CD8-positive, alpha-beta T cell (primary cell): ENCODE measurements at regions of chr2 and their contacts with region 1.

Region 1: DNA sequence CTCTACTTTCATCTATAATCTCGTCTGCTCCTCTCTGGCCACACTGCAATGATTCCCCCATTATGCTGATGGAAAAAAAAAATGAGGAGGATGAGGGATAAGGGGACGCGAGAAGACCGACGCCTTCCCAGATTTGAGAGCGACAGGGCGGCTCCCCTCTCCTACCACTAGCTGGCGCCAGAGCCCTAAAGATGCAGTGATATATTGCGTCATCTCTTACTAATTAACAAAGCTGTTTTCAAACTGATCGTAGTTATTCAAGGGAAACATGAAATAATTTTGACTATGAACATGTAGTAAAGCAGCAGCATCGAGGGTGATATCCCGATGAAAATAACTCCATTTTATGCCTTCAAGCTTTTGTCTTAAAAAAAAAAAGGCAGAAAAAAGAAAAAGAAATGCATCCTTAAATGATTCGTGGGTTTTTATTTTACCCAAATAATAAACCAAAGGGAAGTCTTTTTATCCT is 48.0 kb upstream of the HNRNPA3 start:
- DNase-seq: peak; percentile 58 to 87 (median 82)
- ATAC-seq: peak; percentile 74
- H3K4me3 ChIP-seq: peak overlapping the region; percentile 29 to 36
- H3K4me3 Mint-ChIP-seq: no peak overlapping the region
- H3K27ac ChIP-seq: peak overlapping the region in 1 of 2 experiments; percentile 28
- H3K27ac Mint-ChIP-seq: no peak overlapping the region
- H3K4me1 ChIP-seq: peaks cover 23% of the 10 kb centered on the region
- H3K4me1 Mint-ChIP-seq: peaks cover 14% of the 10 kb centered on the region
- H3K27me3 ChIP-seq: no peaks in the 10 kb centered on the region
- H3K27me3 Mint-ChIP-seq: peaks cover 3% of the 10 kb centered on the region
- CTCF ChIP-seq: peak; percentile 100

Region 2: DNA sequence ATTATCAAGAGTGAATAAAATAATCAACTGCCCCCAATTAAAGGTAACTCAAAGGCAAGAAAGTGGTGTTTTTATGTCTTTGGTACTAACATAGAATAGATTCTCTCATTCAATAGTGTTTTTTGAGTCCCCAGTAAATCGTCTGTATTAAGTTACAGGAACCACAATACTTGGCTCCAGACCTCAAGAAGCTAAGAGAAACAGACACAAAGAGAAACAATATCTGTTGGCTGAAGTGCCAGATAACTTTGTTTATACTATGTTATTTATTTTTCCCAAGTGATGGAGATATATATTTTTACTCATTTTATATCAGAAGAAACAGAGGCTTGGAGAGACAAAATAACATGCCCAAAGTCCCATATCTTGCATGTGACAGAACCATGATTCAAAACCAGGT is 153.8 kb before region 1 on chr2:
- CTCF ChIA-PET with region 1: no interaction called
- POLR2A ChIA-PET with region 1: no interaction called
- intact Hi-C with region 1: no loop called
- DNase-seq: no peak
- ATAC-seq: no peak
- H3K4me3 ChIP-seq: no peak overlapping the region
- H3K4me3 Mint-ChIP-seq: no peak overlapping the region
- H3K27ac ChIP-seq: no peak overlapping the region
- H3K27ac Mint-ChIP-seq: no peak overlapping the region
- H3K4me1 ChIP-seq: peaks cover 3% of the 10 kb centered on the region
- H3K4me1 Mint-ChIP-seq: peaks cover 5% of the 10 kb centered on the region
- H3K27me3 ChIP-seq: no peaks in the 10 kb centered on the region
- H3K27me3 Mint-ChIP-seq: peaks cover 11% of the 10 kb centered on the region
- CTCF ChIP-seq: no peak

Region 3: GRCh38 chr2:177175917-177176668 is 11.5 kb after region 1 on chr2:
- CTCF ChIA-PET with region 1: interaction called, 10 read pairs
- POLR2A ChIA-PET with region 1: interaction called, 3 read pairs
- intact Hi-C with region 1: no loop called
- DNase-seq: no peak
- ATAC-seq: no peak
- H3K4me3 ChIP-seq: no peak overlapping the region
- H3K4me3 Mint-ChIP-seq: no peak overlapping the region
- H3K27ac ChIP-seq: no peak overlapping the region
- H3K27ac Mint-ChIP-seq: no peak overlapping the region
- H3K4me1 ChIP-seq: no peaks in the 10 kb centered on the region
- H3K4me1 Mint-ChIP-seq: no peaks in the 10 kb centered on the region
- H3K27me3 ChIP-seq: no peaks in the 10 kb centered on the region
- H3K27me3 Mint-ChIP-seq: peaks cover 2% of the 10 kb centered on the region
- CTCF ChIP-seq: no peak

Region 4: GRCh38 chr2:177212106-177212890 is 47.7 kb after region 1 on chr2 and contains the start of gene HNRNPA3:
- CTCF ChIA-PET with region 1: interaction called, 8 read pairs
- POLR2A ChIA-PET with region 1: interaction called, 6 read pairs
- intact Hi-C with region 1: loop called (anchors 1 to 2 kb)
- DNase-seq: peak; percentile 99 to 100 (median 100)
- ATAC-seq: peak; percentile 86
- H3K4me3 ChIP-seq: peak within 1 kb of the TSS; percentile 69 to 83
- H3K4me3 Mint-ChIP-seq: peak within 1 kb of the TSS; percentile 88
- H3K27ac ChIP-seq: peak within 1 kb of the TSS; percentile 99 to 100
- H3K27ac Mint-ChIP-seq: peak within 1 kb of the TSS; percentile 100
- H3K4me1 ChIP-seq: peaks cover 50% of the 10 kb centered on the region
- H3K4me1 Mint-ChIP-seq: peaks cover 51% of the 10 kb centered on the region
- H3K27me3 ChIP-seq: no peaks in the 10 kb centered on the region
- H3K27me3 Mint-ChIP-seq: no peaks in the 10 kb centered on the region
- CTCF ChIP-seq: no peak
- total RNA-seq, gene HNRNPA3: 144 to 160 TPM

Region 5: DNA sequence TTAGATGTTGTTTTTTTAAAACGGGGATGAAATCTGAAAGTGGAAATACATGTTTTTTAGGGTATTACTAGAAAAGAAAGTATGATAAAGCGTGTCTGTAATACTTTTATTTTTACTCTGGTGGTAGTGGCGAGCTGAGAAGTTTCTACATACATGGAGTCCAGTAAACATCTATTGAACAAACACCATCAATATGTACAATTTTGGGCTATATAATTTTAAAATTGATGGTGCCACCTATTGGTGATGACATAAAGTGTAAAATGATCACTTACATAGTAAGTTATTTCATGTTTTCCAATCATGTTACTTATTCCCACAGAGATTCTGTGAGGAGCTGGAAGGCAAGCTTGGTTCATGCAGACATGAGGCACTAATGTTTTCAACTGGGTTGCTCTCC is 131.4 kb after region 1 on chr2:
- CTCF ChIA-PET with region 1: interaction called, 67 read pairs
- POLR2A ChIA-PET with region 1: no interaction called
- intact Hi-C with region 1: loop called (anchors 1 kb)
- DNase-seq: peak in 2 of 9 experiments; percentile 53 to 68
- ATAC-seq: peak; percentile 64
- H3K4me3 ChIP-seq: no peak overlapping the region
- H3K4me3 Mint-ChIP-seq: no peak overlapping the region
- H3K27ac ChIP-seq: no peak overlapping the region
- H3K27ac Mint-ChIP-seq: no peak overlapping the region
- H3K4me1 ChIP-seq: peaks cover 13% of the 10 kb centered on the region
- H3K4me1 Mint-ChIP-seq: peaks cover 7% of the 10 kb centered on the region
- H3K27me3 ChIP-seq: no peaks in the 10 kb centered on the region
- H3K27me3 Mint-ChIP-seq: no peaks in the 10 kb centered on the region
- CTCF ChIP-seq: peak; percentile 63

Region 6: DNA sequence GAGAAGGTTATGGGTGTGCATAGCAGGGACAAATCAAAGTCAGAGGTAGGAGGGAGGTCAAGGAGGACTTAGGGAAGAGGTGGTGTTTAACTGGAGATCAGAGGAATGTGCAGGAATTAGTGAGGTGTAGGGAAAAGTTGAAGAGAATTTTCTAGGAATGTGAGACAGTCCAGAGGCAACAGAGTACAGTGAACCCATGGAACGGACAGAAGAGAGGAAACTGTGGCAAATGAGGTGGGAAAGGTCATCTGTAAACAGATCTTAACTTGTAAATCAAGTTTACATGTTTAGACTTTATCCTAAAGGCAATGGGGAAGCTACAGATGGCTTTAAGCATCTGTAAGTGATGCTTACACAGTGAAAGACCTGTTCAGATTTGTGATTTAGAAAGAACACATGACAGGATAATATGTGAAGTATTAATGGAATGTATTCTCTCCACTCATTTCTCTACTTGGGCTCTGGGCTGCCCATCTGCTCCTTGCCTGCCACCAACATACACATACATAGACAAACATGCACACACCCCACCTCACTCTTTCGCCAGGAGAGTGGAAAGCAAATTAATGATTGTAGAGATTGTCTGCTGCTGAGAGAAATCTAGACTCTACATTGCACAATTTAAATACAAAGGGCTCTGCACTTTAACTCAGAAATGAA is 160.8 kb after region 1 on chr2:
- CTCF ChIA-PET with region 1: interaction called, 14 read pairs
- POLR2A ChIA-PET with region 1: interaction called, 4 read pairs
- intact Hi-C with region 1: no loop called
- DNase-seq: no peak
- ATAC-seq: no peak
- H3K4me3 ChIP-seq: no peak overlapping the region
- H3K4me3 Mint-ChIP-seq: no peak overlapping the region
- H3K27ac ChIP-seq: no peak overlapping the region
- H3K27ac Mint-ChIP-seq: no peak overlapping the region
- H3K4me1 ChIP-seq: peaks cover 10% of the 10 kb centered on the region
- H3K4me1 Mint-ChIP-seq: peaks cover 3% of the 10 kb centered on the region
- H3K27me3 ChIP-seq: no peaks in the 10 kb centered on the region
- H3K27me3 Mint-ChIP-seq: no peaks in the 10 kb centered on the region
- CTCF ChIP-seq: no peak

Region 7: GRCh38 chr2:177552422-177553175 is 388.0 kb after region 1 on chr2:
- CTCF ChIA-PET with region 1: interaction called, 6 read pairs
- POLR2A ChIA-PET with region 1: no interaction called
- intact Hi-C with region 1: loop called in 1 of 2 experiments (anchors 10 kb)
- DNase-seq: peak; percentile 83 to 97 (median 91)
- ATAC-seq: peak; percentile 89
- H3K4me3 ChIP-seq: peak overlapping the region; percentile 85 to 99
- H3K4me3 Mint-ChIP-seq: peak overlapping the region; percentile 96
- H3K27ac ChIP-seq: peak overlapping the region; percentile 98 to 100
- H3K27ac Mint-ChIP-seq: peak overlapping the region; percentile 99
- H3K4me1 ChIP-seq: peaks cover 6% of the 10 kb centered on the region
- H3K4me1 Mint-ChIP-seq: peaks cover 12% of the 10 kb centered on the region
- H3K27me3 ChIP-seq: peaks cover 0 to 2% of the 10 kb centered on the region in 2 experiments
- H3K27me3 Mint-ChIP-seq: no peaks in the 10 kb centered on the region
- CTCF ChIP-seq: no peak

Region 8: DNA sequence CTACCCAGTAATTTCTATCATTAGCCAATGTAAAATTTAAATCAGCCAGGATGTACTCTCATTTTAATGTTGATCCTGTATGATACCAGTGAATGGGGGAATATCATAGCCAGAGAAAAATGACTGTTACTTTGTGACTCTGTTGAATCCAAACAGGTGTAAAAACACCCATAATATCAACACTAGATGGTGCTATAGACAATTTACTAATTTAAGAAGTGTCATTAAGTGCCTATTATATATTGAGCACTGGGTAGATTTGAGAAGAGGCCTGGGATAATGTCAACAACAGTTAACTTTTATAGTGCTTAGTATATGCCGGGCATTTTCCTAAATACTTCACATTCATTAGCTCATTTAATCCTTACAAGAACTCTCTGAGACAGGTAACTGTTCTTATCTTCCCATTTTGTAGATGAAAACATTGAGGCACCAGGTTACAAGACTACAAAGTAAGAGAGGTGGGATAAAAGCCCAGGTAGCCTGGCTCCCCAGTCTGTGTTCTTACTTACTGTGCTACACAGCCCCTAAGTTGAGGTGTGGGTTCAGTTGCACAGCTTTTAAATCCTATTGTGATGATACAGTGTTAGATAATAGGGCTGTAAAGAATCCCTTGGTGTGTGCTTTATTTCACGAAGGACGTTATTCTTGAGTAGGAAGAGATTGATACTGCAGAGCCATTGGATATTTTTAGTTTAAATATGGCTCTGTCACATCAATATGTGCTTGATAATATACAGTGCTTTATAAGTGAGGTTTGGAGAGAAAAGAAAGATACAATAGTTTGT is 553.4 kb after region 1 on chr2:
- CTCF ChIA-PET with region 1: no interaction called
- POLR2A ChIA-PET with region 1: no interaction called
- intact Hi-C with region 1: no loop called
- DNase-seq: no peak
- ATAC-seq: no peak
- H3K4me3 ChIP-seq: no peak overlapping the region
- H3K4me3 Mint-ChIP-seq: no peak overlapping the region
- H3K27ac ChIP-seq: no peak overlapping the region
- H3K27ac Mint-ChIP-seq: no peak overlapping the region
- H3K4me1 ChIP-seq: no peaks in the 10 kb centered on the region
- H3K4me1 Mint-ChIP-seq: no peaks in the 10 kb centered on the region
- H3K27me3 ChIP-seq: no peaks in the 10 kb centered on the region
- H3K27me3 Mint-ChIP-seq: peaks cover 4% of the 10 kb centered on the region
- CTCF ChIP-seq: no peak

Region 9: DNA sequence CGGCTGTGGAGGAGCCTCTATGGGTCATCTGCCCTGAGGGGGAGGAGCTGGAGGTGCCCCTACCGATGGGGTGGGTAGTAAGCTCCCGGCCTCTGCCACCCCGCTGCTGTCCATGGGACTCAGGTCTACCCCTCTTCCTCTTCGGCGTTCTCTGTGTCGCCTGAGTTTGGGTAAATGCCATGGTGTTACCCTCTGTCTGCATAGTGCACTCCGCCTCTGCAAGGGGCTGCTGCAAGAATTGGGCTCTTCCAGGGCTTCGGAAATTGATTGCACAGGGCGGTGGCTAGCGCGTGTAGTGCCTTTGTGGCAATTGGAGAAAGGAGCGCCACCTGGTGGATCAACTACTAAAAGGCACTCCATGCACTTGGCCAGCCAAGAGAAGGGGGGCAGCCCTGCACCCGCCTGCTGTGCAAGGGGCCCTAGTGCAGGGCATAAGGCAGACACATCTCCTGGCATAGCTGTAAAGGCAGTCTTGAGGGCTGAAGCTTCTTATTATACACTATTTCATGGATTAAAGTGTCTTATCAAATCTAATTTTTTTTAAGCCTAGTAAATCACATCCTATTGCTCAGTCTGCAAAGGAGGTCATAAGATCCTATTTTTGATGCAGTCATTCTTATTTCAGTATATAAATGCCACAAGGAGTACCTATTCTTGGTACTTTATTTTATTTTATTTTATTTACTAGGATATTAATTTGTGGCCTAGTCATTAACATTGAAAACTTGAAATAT is 599.1 kb after region 1 on chr2:
- CTCF ChIA-PET with region 1: interaction called, 34 read pairs
- POLR2A ChIA-PET with region 1: no interaction called
- intact Hi-C with region 1: loop called (anchors 1 to 2 kb)
- DNase-seq: peak; percentile 57 to 83 (median 77)
- ATAC-seq: peak; percentile 97
- H3K4me3 ChIP-seq: no peak overlapping the region
- H3K4me3 Mint-ChIP-seq: no peak overlapping the region
- H3K27ac ChIP-seq: no peak overlapping the region
- H3K27ac Mint-ChIP-seq: no peak overlapping the region
- H3K4me1 ChIP-seq: peaks cover 5% of the 10 kb centered on the region
- H3K4me1 Mint-ChIP-seq: peaks cover 6% of the 10 kb centered on the region
- H3K27me3 ChIP-seq: no peaks in the 10 kb centered on the region
- H3K27me3 Mint-ChIP-seq: peaks cover 12% of the 10 kb centered on the region
- CTCF ChIP-seq: peak; percentile 82